B cell (primary cell): ENCODE measurements at regions of chr1 and their contacts with region 1.

Region 1: GRCh38 chr1:200488375-200489165 is 78.7 kb upstream of the ZNF281 start:
- DNase-seq: peak; percentile 71
- ATAC-seq: peak; percentile 69
- H3K4me3 ChIP-seq: no peak overlapping the region
- H3K4me3 Mint-ChIP-seq: no peak overlapping the region
- H3K27ac ChIP-seq: no peak overlapping the region
- H3K27ac Mint-ChIP-seq: no peak overlapping the region
- H3K4me1 ChIP-seq: peaks cover 0 to 5% of the 10 kb centered on the region in 2 donors
- H3K4me1 Mint-ChIP-seq: no peaks in the 10 kb centered on the region
- H3K27me3 ChIP-seq: peaks cover 0 to 4% (median 0%) of the 10 kb centered on the region in 4 experiments
- H3K27me3 Mint-ChIP-seq: peaks cover 14% of the 10 kb centered on the region
- CTCF ChIP-seq: peak; percentile 91

Region 2: DNA sequence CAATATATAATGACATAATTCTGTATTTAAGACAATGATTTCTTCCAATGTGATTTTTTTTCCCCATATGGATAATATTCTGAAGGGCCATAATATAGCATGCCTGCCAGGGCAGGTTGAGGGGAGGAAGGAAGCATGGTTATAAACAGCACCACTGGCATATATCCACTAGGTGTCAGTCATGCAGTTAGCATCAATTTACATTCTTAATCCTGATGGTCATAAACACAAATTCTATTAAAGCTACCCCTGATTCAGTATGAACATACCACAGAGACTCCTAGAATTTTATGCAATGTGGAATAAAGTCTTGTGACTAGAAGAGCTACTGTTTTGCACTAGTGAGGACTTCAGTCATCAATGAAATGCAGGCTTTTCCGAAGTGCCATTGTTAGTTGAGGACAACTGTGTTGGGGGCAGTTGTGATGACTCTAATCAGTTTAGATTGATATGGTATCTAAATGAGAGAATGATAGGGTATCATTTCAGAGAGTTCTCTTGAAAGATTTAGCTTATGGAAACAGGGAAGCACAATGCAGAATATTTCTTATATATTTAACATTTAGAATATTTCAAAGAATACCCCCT is 803.8 kb before region 1 on chr1:
- CTCF ChIA-PET with region 1: interaction called, 163 read pairs
- POLR2A ChIA-PET with region 1: no interaction called
- intact Hi-C with region 1: no loop called
- DNase-seq: peak; percentile 69
- ATAC-seq: peak; percentile 73
- H3K4me3 ChIP-seq: no peak overlapping the region
- H3K4me3 Mint-ChIP-seq: no peak overlapping the region
- H3K27ac ChIP-seq: no peak overlapping the region
- H3K27ac Mint-ChIP-seq: no peak overlapping the region
- H3K4me1 ChIP-seq: no peaks in the 10 kb centered on the region
- H3K4me1 Mint-ChIP-seq: no peaks in the 10 kb centered on the region
- H3K27me3 ChIP-seq: peaks cover 0 to 7% (median 6%) of the 10 kb centered on the region in 4 experiments
- H3K27me3 Mint-ChIP-seq: peaks cover 24% of the 10 kb centered on the region
- CTCF ChIP-seq: peak; percentile 92

Region 3: DNA sequence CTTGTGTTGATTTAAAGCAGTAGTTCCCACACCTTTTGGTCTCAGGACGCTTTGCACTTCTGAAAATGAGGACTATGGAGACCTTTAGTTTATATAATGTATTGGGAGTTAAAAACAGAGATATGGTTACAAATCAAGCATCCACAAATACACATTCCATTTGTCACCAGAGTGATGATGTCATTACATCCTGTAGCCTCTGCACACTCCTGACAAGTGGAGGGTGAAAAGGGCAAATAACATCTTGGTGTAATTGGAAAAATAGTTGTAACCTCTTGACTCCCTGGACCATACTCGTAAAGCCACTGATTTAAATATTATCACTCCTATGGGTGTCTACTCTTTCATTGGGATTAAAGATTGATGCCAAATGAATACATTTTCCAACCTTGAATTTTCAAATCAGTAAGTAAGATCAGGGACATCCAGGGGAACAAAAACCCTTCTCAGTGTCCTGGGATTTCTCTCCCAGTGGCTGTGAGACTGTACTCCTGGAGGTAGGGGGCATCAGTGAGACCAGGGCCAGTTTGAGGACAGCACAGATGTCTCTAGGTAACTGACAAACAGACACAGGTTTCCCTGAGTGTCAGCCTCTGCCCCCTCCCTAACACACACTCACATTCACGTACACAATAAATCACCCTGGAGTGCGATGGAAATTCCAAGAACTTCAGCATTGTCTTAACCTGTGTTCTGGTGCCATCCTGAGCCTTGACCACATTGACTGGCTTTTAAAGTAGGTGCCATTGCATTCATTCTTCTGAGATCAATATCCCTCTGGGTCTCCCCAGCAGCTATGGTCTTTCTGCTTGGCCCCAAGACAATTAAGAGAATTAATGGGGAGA is 398.1 kb before region 1 on chr1:
- CTCF ChIA-PET with region 1: interaction called, 6 read pairs
- POLR2A ChIA-PET with region 1: no interaction called
- intact Hi-C with region 1: loop called (anchors 2 kb)
- DNase-seq: peak; percentile 10
- ATAC-seq: no peak
- H3K4me3 ChIP-seq: no peak overlapping the region
- H3K4me3 Mint-ChIP-seq: no peak overlapping the region
- H3K27ac ChIP-seq: no peak overlapping the region
- H3K27ac Mint-ChIP-seq: no peak overlapping the region
- H3K4me1 ChIP-seq: no peaks in the 10 kb centered on the region
- H3K4me1 Mint-ChIP-seq: no peaks in the 10 kb centered on the region
- H3K27me3 ChIP-seq: no peaks in the 10 kb centered on the region
- H3K27me3 Mint-ChIP-seq: peaks cover 18% of the 10 kb centered on the region
- CTCF ChIP-seq: peak; percentile 13

Region 4: GRCh38 chr1:200258447-200259375 is 229.9 kb before region 1 on chr1:
- CTCF ChIA-PET with region 1: interaction called, 3 read pairs
- POLR2A ChIA-PET with region 1: no interaction called
- intact Hi-C with region 1: loop called (anchors 5 kb)
- DNase-seq: peak; percentile 60
- ATAC-seq: peak; percentile 79
- H3K4me3 ChIP-seq: no peak overlapping the region
- H3K4me3 Mint-ChIP-seq: no peak overlapping the region
- H3K27ac ChIP-seq: no peak overlapping the region
- H3K27ac Mint-ChIP-seq: no peak overlapping the region
- H3K4me1 ChIP-seq: no peaks in the 10 kb centered on the region
- H3K4me1 Mint-ChIP-seq: peaks cover 6% of the 10 kb centered on the region
- H3K27me3 ChIP-seq: no peaks in the 10 kb centered on the region
- H3K27me3 Mint-ChIP-seq: no peaks in the 10 kb centered on the region
- CTCF ChIP-seq: peak; percentile 76

Region 5: GRCh38 chr1:200448034-200448762 is 40.4 kb before region 1 on chr1:
- CTCF ChIA-PET with region 1: no interaction called
- POLR2A ChIA-PET with region 1: no interaction called
- intact Hi-C with region 1: no loop called
- DNase-seq: no peak
- ATAC-seq: no peak
- H3K4me3 ChIP-seq: no peak overlapping the region
- H3K4me3 Mint-ChIP-seq: no peak overlapping the region
- H3K27ac ChIP-seq: no peak overlapping the region
- H3K27ac Mint-ChIP-seq: no peak overlapping the region
- H3K4me1 ChIP-seq: peaks cover 0 to 2% of the 10 kb centered on the region in 2 donors
- H3K4me1 Mint-ChIP-seq: peaks cover 19% of the 10 kb centered on the region
- H3K27me3 ChIP-seq: no peaks in the 10 kb centered on the region
- H3K27me3 Mint-ChIP-seq: no peaks in the 10 kb centered on the region
- CTCF ChIP-seq: no peak

Region 6: DNA sequence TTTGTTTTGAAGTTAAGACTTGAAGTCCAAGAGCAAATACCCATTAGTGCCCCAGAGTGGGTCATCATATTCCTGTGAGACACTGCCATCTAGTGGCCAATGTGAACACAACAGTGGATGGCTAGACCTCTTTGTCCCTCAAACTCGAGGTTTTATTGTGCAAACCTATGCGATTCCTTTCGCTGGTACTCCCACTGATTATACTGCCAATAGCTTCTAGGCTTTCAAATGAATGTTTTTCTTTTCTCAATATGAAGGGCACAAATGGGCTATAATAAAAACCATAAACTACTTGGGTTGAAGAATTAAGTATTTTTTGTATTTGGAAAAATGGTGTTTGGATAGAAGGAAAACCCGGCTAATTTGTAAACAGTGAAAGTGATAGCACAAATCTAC is 21.7 kb after region 1 on chr1:
- CTCF ChIA-PET with region 1: interaction called, 5 read pairs
- POLR2A ChIA-PET with region 1: no interaction called
- intact Hi-C with region 1: loop called (anchors 1 kb)
- DNase-seq: peak; percentile 77
- ATAC-seq: peak; percentile 63
- H3K4me3 ChIP-seq: no peak overlapping the region
- H3K4me3 Mint-ChIP-seq: no peak overlapping the region
- H3K27ac ChIP-seq: no peak overlapping the region
- H3K27ac Mint-ChIP-seq: no peak overlapping the region
- H3K4me1 ChIP-seq: no peaks in the 10 kb centered on the region
- H3K4me1 Mint-ChIP-seq: no peaks in the 10 kb centered on the region
- H3K27me3 ChIP-seq: peaks cover 0 to 9% (median 2%) of the 10 kb centered on the region in 4 experiments
- H3K27me3 Mint-ChIP-seq: peaks cover 24% of the 10 kb centered on the region
- CTCF ChIP-seq: peak; percentile 97

Region 7: DNA sequence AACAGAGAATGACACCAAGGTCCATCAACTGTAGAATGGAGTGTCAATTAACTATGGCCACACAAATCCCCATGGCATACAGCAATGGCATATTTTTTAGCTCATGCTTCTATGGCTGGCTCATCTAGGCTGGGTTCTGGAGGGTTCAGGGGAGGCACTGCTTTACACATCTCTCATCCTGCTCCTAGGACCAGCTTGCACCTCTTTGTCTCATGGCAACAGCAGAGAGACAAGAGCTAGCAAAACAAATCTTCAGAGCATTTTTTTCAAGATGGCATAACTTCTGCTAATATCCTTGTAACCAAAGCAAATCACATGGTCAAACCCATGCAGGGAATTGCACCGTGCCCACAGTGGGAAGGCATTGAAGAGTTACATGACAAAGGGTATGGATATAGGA is 49.6 kb after region 1 on chr1:
- CTCF ChIA-PET with region 1: no interaction called
- POLR2A ChIA-PET with region 1: no interaction called
- intact Hi-C with region 1: no loop called
- DNase-seq: no peak
- ATAC-seq: no peak
- H3K4me3 ChIP-seq: no peak overlapping the region
- H3K4me3 Mint-ChIP-seq: no peak overlapping the region
- H3K27ac ChIP-seq: no peak overlapping the region
- H3K27ac Mint-ChIP-seq: no peak overlapping the region
- H3K4me1 ChIP-seq: no peaks in the 10 kb centered on the region
- H3K4me1 Mint-ChIP-seq: no peaks in the 10 kb centered on the region
- H3K27me3 ChIP-seq: no peaks in the 10 kb centered on the region
- H3K27me3 Mint-ChIP-seq: peaks cover 13% of the 10 kb centered on the region
- CTCF ChIP-seq: no peak